Activated CD8-positive, alpha-beta T cell treated with anti-CD3 and anti-CD28 coated beads, Interleukin-2, amount 10 ng/mL, durations not matched to agents 7 days and 5 days (primary cell): ENCODE measurements at regions of chr14 and their contacts with region 1.

Region 1: GRCh38 chr14:21476925-21477681 is at the starts of genes RAB2B and TOX4:
- DNase-seq: peak; percentile 97
- ATAC-seq: peak; percentile 99
- H3K4me3 Mint-ChIP-seq: peak within 1 kb of the TSS; percentile 98
- H3K27ac Mint-ChIP-seq: peak within 1 kb of the TSS; percentile 99
- H3K4me1 Mint-ChIP-seq: peaks cover 31% of the 10 kb centered on the region
- H3K27me3 Mint-ChIP-seq: no peaks in the 10 kb centered on the region
- total RNA-seq, gene RAB2B: 20.7 to 22.1 TPM
- total RNA-seq, gene TOX4: 66.2 to 71.1 TPM

Region 2: DNA sequence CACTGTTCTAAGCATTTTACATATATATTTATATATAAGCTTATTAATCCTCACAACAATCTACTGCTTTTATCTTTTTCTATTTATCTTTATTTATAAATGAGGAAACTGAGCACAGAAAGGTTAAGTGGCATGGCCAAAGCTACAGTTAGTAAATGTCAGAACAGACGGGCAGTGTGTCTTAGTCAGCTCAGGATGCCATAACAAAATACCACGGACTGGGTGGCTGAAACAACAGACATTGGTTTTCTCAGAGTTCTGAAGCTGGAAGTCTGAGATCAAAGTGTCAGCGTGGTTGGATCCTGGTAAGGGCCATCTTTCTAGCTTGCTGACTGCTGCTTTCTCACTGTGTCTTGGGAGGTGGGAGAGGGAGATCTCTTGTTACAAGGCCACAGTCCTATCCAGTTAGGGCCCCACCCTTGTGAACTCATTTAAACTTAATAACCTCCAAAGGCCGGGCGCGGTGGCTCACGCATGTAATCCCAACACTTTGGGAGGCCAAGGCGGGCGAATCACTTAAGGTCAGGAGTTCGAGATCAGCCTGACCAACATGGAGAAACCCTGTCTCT is 177.5 kb before region 1 on chr14:
- CTCF ChIA-PET with region 1: no interaction called
- POLR2A ChIA-PET with region 1: no interaction called
- DNase-seq: no peak
- ATAC-seq: no peak
- H3K4me3 Mint-ChIP-seq: no peak overlapping the region
- H3K27ac Mint-ChIP-seq: no peak overlapping the region
- H3K4me1 Mint-ChIP-seq: peaks cover 12% of the 10 kb centered on the region
- H3K27me3 Mint-ChIP-seq: peaks cover 26% of the 10 kb centered on the region

Region 3: DNA sequence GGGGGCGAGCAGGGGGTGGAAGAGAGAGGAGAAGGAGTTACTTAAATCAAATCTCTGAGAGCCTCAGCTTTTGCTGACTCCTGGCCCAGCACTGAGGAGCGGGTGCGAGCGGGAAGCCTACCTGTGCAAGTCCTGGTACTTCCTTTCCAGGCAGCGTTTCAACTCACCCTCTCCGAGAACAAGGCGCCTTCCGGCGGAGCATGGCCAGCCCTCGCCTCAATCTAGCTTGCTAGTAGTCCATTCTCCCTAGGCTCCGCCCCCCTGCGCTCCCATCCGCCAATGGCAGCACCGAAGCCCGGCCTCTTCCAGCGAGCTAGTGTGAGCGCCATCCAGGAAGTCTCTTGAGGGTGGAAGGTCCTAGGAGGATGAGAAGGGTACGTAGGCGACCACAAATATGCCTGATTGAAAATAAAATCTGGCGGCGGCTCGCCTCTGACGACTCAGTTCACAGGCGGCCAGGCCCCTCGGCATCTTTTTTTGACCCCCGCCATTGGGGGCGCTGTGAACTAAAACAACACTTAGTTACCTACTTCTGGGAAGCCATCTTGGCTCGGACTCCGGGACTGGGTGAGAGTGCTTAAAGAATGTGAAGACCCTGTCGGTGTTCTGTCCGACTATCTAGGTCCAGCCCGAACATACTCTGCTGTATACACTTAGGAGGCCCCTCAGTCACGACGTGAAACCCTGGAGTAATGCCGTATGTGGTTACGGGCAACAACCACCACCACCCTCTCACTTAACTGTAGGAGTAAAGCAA is 21.0 kb before region 1 on chr14 and contains the start of gene CHD8:
- CTCF ChIA-PET with region 1: interaction called, 53 read pairs
- POLR2A ChIA-PET with region 1: interaction called, 20 read pairs
- DNase-seq: peak; percentile 100
- ATAC-seq: peak; percentile 99
- H3K4me3 Mint-ChIP-seq: peak within 1 kb of the TSS; percentile 95
- H3K27ac Mint-ChIP-seq: peak within 1 kb of the TSS; percentile 98
- H3K4me1 Mint-ChIP-seq: peaks cover 32% of the 10 kb centered on the region
- H3K27me3 Mint-ChIP-seq: no peaks in the 10 kb centered on the region
- total RNA-seq, gene CHD8: 116 to 119 TPM

Region 4: DNA sequence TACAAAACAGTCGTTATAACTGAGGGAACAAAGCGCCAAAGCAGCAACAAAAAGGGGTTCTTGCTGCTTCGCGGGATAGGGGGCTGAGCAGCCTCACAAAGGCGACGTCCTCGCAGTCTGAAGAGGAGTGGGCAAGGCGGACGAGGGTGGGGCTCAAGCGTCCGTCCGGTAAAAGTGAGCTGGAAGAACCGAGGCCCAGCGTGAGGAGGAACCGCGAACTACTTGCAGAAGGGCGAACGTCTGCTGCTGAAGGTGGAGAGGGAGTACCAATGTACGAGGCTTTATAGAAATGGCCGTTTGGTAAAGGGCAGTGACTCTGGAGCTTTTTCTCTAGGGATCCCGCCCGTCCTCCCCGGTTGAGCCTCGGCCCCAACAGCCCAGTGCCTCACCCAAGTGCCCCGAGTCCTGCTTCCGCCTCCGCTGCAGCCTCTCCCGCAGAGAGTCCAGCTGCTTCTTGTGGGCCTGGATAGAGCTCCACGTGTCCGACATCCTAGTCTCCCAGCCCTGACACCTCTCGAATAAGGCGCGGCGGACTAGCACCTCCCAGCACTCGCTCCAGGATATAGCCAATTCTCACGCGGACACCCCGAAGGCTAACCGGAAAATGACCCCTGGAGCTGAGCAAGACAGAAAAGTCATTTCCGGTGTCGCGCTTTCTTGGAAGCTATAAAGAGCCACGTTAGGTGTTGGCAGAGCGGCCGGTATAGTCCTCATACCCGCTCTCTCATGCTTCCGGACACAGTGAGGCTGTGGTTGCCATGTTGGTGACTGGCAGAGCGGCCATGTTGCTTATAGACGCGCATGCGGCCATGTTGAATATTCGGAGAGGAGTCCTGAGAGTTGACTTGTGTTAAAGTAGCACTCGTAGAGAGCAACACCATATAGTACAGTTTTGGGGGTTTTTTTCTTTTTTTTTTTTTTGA is 33.9 kb after region 1 on chr14 and contains the start of gene METTL3:
- CTCF ChIA-PET with region 1: interaction called, 20 read pairs
- POLR2A ChIA-PET with region 1: interaction called, 14 read pairs
- DNase-seq: peak; percentile 97
- ATAC-seq: peak; percentile 99
- H3K4me3 Mint-ChIP-seq: peak within 1 kb of the TSS; percentile 96
- H3K27ac Mint-ChIP-seq: peak within 1 kb of the TSS; percentile 99
- H3K4me1 Mint-ChIP-seq: peaks cover 32% of the 10 kb centered on the region
- H3K27me3 Mint-ChIP-seq: peaks cover 6% of the 10 kb centered on the region
- total RNA-seq, gene METTL3: 68.3 to 70.8 TPM

Region 5: GRCh38 chr14:21557084-21557901 is 80.2 kb after region 1 on chr14:
- CTCF ChIA-PET with region 1: interaction called, 13 read pairs
- POLR2A ChIA-PET with region 1: no interaction called
- DNase-seq: peak; percentile 87
- ATAC-seq: peak; percentile 76
- H3K4me3 Mint-ChIP-seq: peak overlapping the region; percentile 39
- H3K27ac Mint-ChIP-seq: no peak overlapping the region
- H3K4me1 Mint-ChIP-seq: peaks cover 6% of the 10 kb centered on the region
- H3K27me3 Mint-ChIP-seq: no peaks in the 10 kb centered on the region